ENCODE measurements at regions of chr3 and their contacts with region 1.

Region 1: GRCh38 chr3:155791190-155791589 is 14.9 kb downstream of the C3orf33 start:
- DNase-seq: no peak
- H3K4me3 Mint-ChIP-seq: no peak overlapping the region
- H3K27ac Mint-ChIP-seq: no peak overlapping the region
- H3K4me1 Mint-ChIP-seq: peaks cover 12% of the 10 kb centered on the region
- H3K27me3 Mint-ChIP-seq: no peaks in the 10 kb centered on the region
- CTCF ChIP-seq: no peak

Region 2: DNA sequence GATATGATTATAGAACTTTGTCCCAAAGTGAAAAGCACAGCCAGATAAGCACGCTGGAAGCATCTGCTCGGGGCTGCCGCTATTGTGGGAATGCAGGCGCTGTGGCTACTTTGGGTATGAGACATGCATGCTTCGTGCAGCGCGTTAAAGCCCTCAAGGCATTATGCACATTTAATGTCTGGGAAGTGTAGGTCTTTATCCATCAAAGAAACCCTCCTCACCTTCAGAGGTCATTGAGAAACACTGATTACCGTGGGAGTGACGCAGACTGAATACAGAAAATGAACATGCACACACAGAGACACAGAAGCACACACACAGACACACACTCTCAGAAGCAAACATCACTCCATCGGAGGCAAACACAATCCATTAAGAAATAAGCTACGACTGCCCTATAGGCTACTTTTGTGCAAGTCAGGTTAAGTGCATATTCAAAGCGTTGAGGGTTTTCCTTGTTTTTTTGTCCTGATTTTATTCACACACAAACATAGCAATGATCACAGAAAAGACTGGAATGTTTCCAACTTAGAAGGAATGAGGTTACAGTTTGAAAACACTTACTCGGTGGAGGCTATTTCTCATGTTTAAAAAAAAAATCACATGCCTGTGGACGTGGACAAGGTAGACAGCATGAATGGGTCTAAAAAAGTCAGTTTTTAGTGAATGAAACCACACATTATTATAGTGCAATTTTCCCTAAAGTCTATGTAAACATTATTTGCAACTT is 114.8 kb before region 1 on chr3:
- CTCF ChIA-PET with region 1: interaction called, 10 read pairs
- intact Hi-C with region 1: no loop called
- DNase-seq: peak; percentile 20
- H3K4me3 Mint-ChIP-seq: peak overlapping the region; percentile 62
- H3K27ac Mint-ChIP-seq: no peak overlapping the region
- H3K4me1 Mint-ChIP-seq: peaks cover 12% of the 10 kb centered on the region
- H3K27me3 Mint-ChIP-seq: no peaks in the 10 kb centered on the region
- CTCF ChIP-seq: no peak

Measured in Calu3 (cell line).